ENCODE measurements at regions of chr14 and their contacts with region 1.

Region 1: GRCh38 chr14:61894452-61895077 is 132.3 kb downstream of the SNAPC1 start:
- DNase-seq: peak; percentile 57

Region 2: DNA sequence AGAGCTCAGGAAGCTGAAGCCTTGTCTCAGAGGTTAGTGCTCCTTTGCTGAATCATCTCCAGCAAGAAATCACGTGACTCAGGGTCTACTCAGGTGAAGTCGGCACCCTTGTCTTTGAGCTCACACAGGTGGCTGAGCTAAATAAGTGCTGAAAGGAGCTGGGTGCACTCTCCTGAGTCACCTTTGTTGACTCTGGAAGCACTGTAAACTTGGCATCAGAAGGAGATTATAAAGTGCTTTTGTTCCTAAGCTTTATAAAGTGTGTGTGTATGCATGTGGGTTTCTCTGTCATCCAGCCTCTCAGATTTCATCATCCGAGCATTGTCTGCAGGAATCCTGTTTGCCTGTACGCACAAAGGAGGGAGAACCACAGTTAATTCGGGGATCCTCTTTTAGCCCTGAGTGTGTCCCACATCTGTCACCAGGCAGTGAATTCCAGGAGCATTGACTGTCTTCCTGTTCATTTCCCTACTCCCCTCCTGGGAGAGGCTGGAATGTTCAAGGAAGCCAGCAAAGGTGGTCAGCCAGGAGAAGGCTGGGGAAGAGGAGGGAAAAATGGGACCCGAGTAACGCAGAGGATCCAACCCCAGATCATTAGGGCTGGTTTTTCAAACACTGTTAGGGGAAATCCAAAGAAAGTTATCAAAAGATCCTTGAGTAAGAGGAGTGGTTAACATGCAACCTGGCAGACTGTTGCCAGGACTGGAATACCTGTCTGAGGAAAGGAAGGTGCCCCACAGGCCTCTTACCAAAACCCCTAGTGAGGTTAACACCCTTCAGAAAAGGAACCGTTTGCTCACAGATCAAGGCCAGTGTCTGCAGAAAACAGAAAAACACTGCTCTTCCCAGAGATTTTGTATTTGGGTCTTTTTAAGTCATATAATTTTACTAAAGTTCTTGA is 356.8 kb before region 1 on chr14:
- in situ Hi-C with region 1: no loop called
- DNase-seq: no peak

Region 3: GRCh38 chr14:61620130-61620946 is 274.2 kb before region 1 on chr14:
- in situ Hi-C with region 1: no loop called
- DNase-seq: no peak

Region 4: DNA sequence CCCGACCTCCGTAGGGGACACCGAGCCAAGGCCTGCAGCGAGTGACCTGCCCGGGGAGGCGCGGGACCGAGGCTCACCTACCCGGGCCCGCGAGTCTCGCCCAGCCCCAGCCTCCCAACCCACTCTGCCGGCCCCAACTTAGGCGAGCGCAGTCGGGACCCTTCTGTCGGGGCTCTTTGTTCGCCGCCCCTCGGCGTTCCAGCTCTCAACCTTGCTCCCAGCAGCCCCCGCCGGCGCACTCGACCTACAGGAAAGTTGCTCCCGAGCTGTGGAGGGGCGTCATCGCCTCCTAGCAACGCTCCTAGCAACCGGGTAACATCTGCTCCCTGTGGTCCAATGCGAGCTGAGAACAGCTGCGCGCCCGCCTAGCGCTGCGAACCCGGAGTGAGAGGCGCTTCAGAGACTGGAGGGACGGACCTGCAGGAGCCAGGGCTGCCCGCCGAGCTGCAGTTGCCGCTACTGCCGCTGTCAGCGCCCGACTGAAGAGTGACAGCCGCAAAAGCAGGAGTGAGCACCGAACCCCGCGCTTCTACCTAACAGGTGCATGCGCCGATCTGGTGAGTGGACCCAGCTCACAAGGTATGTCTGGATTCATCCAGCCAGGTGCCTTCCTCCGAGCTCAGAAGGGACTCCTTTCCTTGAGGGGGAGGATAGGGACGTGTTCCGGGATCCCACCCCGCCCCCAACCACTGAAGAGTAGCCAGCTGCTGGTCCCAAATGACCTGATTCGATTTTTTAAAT is 222.6 kb after region 1 on chr14:
- in situ Hi-C with region 1: loop called (anchors 25 kb)
- DNase-seq: peak; percentile 65

Measured in KBM-7 (cell line).